Activated T-helper 2 cell treated with anti-CD3 and anti-CD28 coated beads, Interferon-gamma antibody, Interleukin-2, Interleukin-4, amounts not matched to agents 10 μg/mL and 5 μg/mL and 100 μg/mL, durations not matched to agents 14 hours and 24 hours and 36 hours (primary cell): ENCODE measurements at regions of chr7 and their contacts with region 1.

Region 1: DNA sequence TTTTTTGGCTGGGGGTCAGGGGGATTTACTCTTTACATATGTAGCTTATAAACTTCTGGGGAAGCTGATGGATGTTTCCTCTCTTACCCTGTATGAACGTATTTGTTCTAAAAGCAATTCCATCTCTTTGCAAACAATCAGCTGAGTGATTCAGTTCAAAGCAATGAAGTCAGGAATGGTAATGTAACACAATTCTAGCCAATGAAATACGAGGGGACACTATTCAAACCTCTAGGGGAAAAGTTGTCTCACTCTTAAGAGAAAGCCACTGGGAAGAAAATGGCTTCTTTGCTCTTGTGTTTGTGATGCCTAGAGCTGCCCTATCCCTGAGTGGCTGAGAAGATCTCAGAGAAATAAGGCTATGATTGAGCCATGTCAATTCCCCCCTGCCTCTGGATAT is 134.8 kb upstream of the SEMA3C start:
- DNase-seq: no peak
- H3K4me3 Mint-ChIP-seq: no peak overlapping the region
- H3K27ac Mint-ChIP-seq: no peak overlapping the region
- H3K4me1 Mint-ChIP-seq: no peaks in the 10 kb centered on the region
- H3K27me3 Mint-ChIP-seq: no peaks in the 10 kb centered on the region

Region 2: DNA sequence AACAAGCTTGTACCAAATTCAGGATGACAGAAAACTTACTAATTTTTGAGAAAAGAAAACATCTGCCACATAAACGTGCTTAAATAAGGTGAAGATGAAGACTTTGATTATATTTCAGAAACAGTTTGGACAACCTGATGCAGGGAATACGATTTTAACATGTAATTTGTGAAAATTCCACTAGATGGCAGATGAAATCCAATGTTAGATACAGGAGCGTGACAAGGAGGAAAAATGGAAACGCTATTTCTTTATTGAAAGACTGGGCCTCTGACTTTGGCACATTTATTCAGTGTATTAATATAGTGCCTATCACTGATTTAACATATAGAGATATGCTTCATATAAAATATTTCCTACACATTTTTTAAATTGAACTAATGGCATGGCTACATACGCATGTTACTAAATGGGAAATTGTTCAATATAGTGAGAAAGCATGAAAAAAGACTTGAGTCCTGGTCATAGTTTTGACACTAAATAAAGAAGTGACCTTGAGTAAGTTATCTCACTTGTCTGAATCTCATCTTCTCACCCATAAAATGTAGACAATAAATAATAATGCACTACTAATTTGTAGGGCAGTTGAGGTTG is 354.5 kb before region 1 on chr7:
- intact Hi-C with region 1: loop called (anchors 5 kb)
- DNase-seq: no peak
- H3K4me3 Mint-ChIP-seq: no peak overlapping the region
- H3K27ac Mint-ChIP-seq: no peak overlapping the region
- H3K4me1 Mint-ChIP-seq: no peaks in the 10 kb centered on the region
- H3K27me3 Mint-ChIP-seq: no peaks in the 10 kb centered on the region

Region 3: GRCh38 chr7:81014266-81014665 is 39.4 kb before region 1 on chr7:
- intact Hi-C with region 1: no loop called
- DNase-seq: no peak
- H3K4me3 Mint-ChIP-seq: no peak overlapping the region
- H3K27ac Mint-ChIP-seq: no peak overlapping the region
- H3K4me1 Mint-ChIP-seq: no peaks in the 10 kb centered on the region
- H3K27me3 Mint-ChIP-seq: no peaks in the 10 kb centered on the region

Region 4: GRCh38 chr7:81079746-81080145 is 26.1 kb after region 1 on chr7:
- intact Hi-C with region 1: no loop called
- DNase-seq: no peak
- H3K4me3 Mint-ChIP-seq: no peak overlapping the region
- H3K27ac Mint-ChIP-seq: no peak overlapping the region
- H3K4me1 Mint-ChIP-seq: no peaks in the 10 kb centered on the region
- H3K27me3 Mint-ChIP-seq: no peaks in the 10 kb centered on the region